Astrocyte of the cerebellum (primary cell): ENCODE measurements at regions of chr20 and their contacts with region 1.

Region 1: DNA sequence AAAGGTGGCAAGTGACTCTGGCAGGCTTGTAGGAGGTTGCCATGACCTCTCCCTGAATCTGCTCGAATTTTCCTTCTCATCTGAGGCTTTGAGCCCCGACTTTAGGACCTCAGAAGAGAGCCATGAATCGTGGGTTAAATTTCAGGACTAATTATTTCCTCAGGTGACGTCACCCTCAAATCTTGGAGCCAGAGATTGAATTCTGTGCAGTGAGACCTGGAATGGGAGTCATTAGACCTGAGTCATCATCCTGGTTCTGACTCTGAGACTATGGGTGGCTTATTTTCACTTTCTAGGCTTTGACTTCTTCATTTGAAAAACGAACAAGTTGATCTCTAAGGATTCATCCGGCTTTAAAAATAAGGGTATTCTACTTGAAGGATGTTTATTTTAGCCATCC is 48.5 kb upstream of the PDYN start:
- DNase-seq: no peak
- H3K4me3 ChIP-seq: no peak overlapping the region
- CTCF ChIP-seq: no peak

Region 2: DNA sequence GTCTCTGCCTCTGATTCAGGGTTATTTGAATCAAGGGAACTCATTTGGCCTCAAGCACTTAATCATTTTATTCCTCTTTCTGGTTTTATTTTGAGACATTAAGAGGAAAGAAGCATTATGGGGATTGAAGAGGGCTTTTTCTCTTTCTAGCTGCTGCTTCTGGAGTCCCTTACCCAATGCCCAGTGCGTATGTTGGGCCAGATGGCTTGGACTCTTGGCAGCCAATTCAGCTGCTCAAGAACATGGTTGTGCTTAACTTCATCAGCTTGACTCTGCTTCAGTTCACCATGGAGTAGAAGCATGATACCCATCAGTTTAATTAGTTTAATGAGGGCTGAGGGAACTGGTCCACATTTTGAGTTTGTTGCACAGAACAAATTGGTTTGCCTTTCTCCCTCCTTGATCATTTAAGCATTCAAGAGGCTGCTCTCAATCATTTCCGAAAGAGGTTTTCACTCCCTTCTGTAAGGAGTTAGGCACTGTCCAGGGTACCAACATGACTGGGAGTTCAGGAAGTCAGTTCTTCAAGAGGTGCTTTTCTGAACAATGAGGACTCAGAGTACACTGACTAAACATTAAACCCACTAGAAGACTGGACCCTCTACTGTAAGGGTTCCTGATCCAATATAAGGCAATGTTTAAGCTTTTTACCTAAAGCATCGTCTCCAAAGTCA is 63.2 kb before region 1 on chr20:
- in situ Hi-C with region 1: loop called (anchors 10 kb)
- DNase-seq: no peak
- H3K4me3 ChIP-seq: no peak overlapping the region
- CTCF ChIP-seq: no peak